ENCODE measurements at regions of chr3 and their contacts with region 1.

Region 1: DNA sequence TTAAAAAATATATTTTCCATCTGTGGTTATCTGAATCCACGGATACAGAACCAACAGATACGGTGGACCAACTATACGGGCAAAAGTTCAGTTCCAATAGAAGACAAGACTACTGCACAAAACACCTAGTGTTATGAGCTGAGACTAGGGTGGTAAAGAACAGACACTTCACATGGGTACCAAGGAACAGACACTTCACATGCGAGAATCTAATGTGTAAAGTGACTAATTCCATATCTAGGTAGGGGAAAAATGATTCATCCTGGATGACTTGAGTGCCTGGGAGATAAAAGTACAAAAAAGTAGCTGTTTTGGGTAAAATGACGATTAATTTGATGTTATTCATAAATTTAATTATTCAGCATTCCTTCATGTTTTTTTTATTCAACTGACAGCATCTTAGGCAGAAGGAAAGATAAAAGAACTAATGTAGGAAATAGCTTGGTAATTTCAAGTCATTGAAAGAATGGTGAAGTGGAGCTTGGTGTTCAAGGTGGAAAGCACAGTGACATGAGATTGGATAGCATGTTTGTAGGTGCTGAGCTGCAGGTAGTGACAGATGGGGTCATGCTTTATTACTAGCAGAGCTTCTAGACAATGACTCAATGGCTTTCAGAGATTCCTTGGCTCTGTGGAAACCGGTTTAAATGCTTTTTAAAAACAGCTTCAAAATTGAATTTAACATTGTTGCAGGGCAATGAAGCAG is 5.2 kb downstream of the CD200 start:
- DNase-seq: no peak
- H3K4me3 ChIP-seq: no peak overlapping the region
- H3K27me3 ChIP-seq: peaks cover 16% of the 10 kb centered on the region
- CTCF ChIP-seq: no peak

Region 2: GRCh38 chr3:112519424-112520001 is 181.3 kb after region 1 on chr3:
- CTCF ChIA-PET with region 1: interaction called, 5 read pairs
- POLR2A ChIA-PET with region 1: interaction called, 10 read pairs
- DNase-seq: peak; percentile 4
- H3K4me3 ChIP-seq: no peak overlapping the region
- H3K27me3 ChIP-seq: no peaks in the 10 kb centered on the region
- CTCF ChIP-seq: peak; percentile 72